ENCODE measurements at regions of chr2 and their contacts with region 1.

Region 1: DNA sequence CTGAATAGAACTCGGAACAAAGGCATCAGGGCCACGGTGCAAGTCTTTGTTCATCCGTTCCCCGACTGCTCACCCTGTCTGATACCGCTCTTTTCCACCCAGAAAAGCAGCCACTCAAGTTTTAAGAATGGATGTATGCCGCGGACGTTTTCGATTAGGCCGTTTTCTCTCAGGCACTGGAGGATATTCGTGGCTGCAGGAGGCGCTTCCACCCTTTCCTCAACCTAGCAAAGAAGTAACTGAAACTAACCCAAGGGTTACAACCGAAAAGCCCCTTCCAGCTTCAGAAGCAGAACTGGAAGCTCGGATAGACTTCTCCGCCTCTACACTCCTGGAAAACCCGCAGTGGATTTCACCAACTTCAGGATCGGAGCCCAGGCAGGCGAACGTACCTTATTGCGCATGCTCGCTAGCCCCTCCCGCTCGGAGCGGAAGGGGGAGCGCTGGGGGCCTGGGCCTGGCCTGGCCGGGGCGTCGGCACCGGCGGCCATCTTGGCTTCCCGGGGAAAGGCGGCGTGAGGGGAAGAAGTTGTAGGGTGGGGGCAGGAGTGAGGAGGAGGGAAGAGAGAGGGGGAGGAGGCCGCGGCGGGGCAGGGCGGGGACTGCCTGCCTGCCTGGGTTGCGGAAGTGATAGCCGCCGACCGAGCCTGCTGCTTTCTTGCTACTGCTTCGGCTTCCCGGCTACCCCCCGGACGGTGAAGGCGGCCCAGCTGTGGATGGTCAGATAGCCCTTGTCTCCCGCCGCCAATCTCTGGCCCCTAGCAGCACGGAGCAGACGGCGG is at the start of gene ACTR3:
- DNase-seq: peak; percentile 100
- H3K4me3 Mint-ChIP-seq: peak within 1 kb of the TSS; percentile 94
- H3K27ac Mint-ChIP-seq: peak within 1 kb of the TSS; percentile 99
- H3K4me1 Mint-ChIP-seq: peaks cover 66% of the 10 kb centered on the region
- H3K27me3 Mint-ChIP-seq: no peaks in the 10 kb centered on the region
- total RNA-seq, gene ACTR3: 452 and 460 TPM in 2 replicates

Region 2: DNA sequence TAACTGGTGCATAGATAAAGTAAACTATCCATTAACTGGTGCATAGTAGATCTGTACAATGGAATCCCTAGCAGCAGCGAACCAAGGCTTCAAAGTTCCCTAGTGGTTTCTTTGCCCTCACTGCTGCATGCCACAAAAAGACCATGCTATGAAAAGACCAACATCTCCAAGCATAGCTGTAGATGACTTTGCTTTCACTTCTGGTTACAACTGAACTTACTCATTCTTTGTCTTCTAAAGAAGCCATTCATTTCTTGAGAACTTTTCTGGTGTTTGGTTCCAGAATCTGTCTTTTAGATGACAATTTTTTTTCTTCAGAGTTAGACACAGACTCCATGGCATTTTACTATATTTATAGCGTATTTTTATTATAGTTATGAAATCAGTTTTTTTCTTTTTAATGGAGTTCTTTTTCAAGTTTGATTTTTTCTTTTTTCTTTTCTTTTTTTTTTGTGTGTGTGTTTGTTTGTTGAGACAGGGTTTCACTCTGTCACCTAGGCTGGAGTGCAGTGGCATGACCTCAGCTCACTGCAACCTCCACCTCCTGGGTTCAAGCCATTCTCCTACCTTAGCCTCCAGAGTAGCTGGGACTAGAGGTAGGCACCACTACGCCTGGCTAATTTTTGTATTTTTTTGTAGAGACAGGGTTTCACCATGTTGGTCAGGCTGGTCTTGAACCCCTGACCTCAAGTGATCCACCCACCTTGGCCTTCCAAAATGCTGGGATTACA is 196.8 kb before region 1 on chr2:
- intact Hi-C with region 1: loop called (anchors 1 kb)
- DNase-seq: peak; percentile 83
- H3K4me3 Mint-ChIP-seq: peak overlapping the region; percentile 82
- H3K27ac Mint-ChIP-seq: peak overlapping the region; percentile 99
- H3K4me1 Mint-ChIP-seq: peaks cover 36% of the 10 kb centered on the region
- H3K27me3 Mint-ChIP-seq: peaks cover 2% of the 10 kb centered on the region

Region 3: DNA sequence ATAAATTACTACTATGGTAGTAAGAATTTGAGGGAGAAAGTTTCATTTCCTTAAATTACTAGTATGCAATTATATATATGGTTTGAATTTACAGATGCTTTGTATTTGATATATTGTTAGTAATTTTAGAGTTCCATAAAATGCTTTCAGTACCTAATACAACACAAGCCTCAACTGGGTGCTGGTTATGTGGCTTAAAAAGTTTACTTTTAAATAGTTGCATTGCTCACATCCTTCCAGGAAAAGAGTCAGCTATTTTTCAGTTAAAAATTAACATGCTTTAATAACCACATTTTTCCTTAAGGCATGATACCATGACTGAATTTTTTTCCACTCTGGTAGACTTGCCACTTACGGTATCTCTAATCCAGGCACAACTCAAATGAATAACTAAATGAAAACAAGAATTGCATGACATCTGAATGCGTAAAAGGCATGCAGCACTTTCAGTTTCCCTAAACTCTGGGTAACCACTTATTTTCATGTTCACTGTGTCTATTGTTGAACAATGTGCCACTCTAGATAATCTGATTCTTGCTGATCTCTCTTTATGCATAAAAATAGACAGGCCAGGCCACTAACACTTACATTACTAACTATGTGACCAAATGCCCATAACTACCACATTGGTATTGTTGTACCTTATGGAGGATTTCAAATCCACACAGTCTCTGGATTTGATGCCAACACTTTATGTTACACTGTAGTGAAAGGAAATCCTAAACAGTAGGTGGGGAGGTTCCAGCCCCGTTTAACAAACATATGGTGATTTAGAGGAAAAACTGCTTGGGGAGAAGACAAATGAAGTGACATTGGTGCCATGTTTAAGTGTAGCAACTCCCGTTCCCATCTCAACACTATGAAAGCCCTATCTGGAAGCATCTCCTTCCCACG is 97.7 kb before region 1 on chr2:
- intact Hi-C with region 1: loop called (anchors 1 kb)
- DNase-seq: peak; percentile 71
- H3K4me3 Mint-ChIP-seq: peak overlapping the region; percentile 62
- H3K27ac Mint-ChIP-seq: peak overlapping the region; percentile 93
- H3K4me1 Mint-ChIP-seq: peaks cover 23% of the 10 kb centered on the region
- H3K27me3 Mint-ChIP-seq: no peaks in the 10 kb centered on the region

Region 4: GRCh38 chr2:113876503-113877387 is 12.9 kb before region 1 on chr2:
- intact Hi-C with region 1: loop called (anchors 1 kb)
- DNase-seq: peak; percentile 93
- H3K4me3 Mint-ChIP-seq: peak overlapping the region; percentile 74
- H3K27ac Mint-ChIP-seq: peak overlapping the region; percentile 90
- H3K4me1 Mint-ChIP-seq: peaks cover 46% of the 10 kb centered on the region
- H3K27me3 Mint-ChIP-seq: no peaks in the 10 kb centered on the region

Region 5: DNA sequence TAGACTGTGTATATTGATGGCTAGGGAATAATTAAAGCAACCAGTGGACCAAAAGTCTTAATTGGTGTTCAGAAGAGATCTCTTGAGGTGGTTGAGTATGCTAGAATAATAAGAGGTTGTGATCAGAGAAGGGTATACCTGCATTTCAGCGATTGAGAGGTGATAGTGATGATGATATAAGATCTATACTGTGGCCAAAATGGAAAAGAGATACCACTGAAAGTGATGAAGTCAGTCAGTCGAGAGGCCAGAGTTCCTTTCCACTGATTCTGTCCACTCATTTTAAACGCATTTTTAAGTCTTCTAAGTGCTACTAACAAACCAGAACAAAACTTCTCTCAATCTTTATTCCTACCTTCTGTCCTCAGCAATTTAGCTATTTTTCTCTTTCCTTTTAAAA is 33.1 kb after region 1 on chr2:
- intact Hi-C with region 1: loop called (anchors 2 kb)
- DNase-seq: no peak
- H3K4me3 Mint-ChIP-seq: no peak overlapping the region
- H3K27ac Mint-ChIP-seq: no peak overlapping the region
- H3K4me1 Mint-ChIP-seq: peaks cover 22% of the 10 kb centered on the region
- H3K27me3 Mint-ChIP-seq: no peaks in the 10 kb centered on the region

Region 6: GRCh38 chr2:114170070-114170469 is 280.4 kb after region 1 on chr2:
- intact Hi-C with region 1: no loop called
- DNase-seq: no peak
- H3K4me3 Mint-ChIP-seq: no peak overlapping the region
- H3K27ac Mint-ChIP-seq: no peak overlapping the region
- H3K4me1 Mint-ChIP-seq: no peaks in the 10 kb centered on the region
- H3K27me3 Mint-ChIP-seq: no peaks in the 10 kb centered on the region

Measured in activated CD4-positive, alpha-beta T cell treated with anti-CD3 and anti-CD28 coated beads, Interleukin-2, amount 10 ng/mL, durations not matched to agents 24 days and 14 days (primary cell).